CD4-positive, alpha-beta T cell (primary cell): ENCODE measurements at regions of chr13 and their contacts with region 1.

Region 1: GRCh38 chr13:30395192-30396084 is 26.9 kb upstream of the UBE2L5 start:
- DNase-seq: peak; percentile 48 to 89 (median 73)
- ATAC-seq: peak; percentile 78
- H3K4me3 ChIP-seq: peak overlapping the region; percentile 62
- H3K4me3 Mint-ChIP-seq: peak overlapping the region; percentile 90
- H3K27ac ChIP-seq: peak overlapping the region; percentile 82 to 94
- H3K27ac Mint-ChIP-seq: peak overlapping the region; percentile 89
- H3K4me1 ChIP-seq: peaks cover 37% of the 10 kb centered on the region
- H3K4me1 Mint-ChIP-seq: peaks cover 58% of the 10 kb centered on the region
- H3K27me3 ChIP-seq: no peaks in the 10 kb centered on the region
- H3K27me3 Mint-ChIP-seq: no peaks in the 10 kb centered on the region
- CTCF ChIP-seq: no peak

Region 2: DNA sequence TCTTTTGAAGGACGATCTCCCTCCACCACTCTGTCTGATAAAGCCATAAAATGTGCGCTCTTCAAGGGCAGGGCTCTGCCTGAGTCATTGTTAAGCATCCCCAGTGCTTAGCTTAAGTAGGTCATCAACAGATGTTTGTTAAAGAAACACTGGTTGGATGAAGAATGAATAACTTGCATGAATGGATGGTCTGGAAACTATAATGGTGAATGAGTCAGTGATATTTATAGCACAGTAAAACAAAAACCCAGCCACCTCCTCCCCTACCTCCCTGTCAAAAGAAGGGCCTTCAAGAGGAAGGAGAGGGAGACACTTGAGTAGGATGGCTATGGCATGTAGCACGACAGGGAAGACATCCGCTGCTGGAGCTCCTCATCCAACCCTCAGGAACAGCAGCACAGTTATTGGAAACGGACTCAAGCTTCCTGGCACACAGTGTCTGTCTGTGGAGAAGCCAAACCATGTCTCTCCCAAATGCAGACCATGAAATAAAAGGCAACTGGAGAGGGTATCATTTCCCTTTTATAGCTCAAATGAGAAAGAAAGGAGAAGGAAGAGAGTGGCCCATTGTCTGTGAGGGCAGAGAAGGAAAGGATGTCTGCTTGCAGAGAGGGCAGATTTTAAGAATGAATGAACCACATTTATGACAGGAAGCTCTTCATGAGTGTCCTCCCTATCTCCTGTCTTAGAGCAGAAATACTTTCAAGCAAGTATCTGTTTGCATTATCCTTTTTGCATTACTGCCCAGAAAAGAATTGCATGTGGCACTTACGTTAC is 361.6 kb before region 1 on chr13:
- CTCF ChIA-PET with region 1: no interaction called
- POLR2A ChIA-PET with region 1: no interaction called
- intact Hi-C with region 1: no loop called
- DNase-seq: no peak
- ATAC-seq: no peak
- H3K4me3 ChIP-seq: no peak overlapping the region
- H3K4me3 Mint-ChIP-seq: no peak overlapping the region
- H3K27ac ChIP-seq: no peak overlapping the region
- H3K27ac Mint-ChIP-seq: no peak overlapping the region
- H3K4me1 ChIP-seq: no peaks in the 10 kb centered on the region
- H3K4me1 Mint-ChIP-seq: no peaks in the 10 kb centered on the region
- H3K27me3 ChIP-seq: no peaks in the 10 kb centered on the region
- H3K27me3 Mint-ChIP-seq: no peaks in the 10 kb centered on the region
- CTCF ChIP-seq: no peak

Region 3: DNA sequence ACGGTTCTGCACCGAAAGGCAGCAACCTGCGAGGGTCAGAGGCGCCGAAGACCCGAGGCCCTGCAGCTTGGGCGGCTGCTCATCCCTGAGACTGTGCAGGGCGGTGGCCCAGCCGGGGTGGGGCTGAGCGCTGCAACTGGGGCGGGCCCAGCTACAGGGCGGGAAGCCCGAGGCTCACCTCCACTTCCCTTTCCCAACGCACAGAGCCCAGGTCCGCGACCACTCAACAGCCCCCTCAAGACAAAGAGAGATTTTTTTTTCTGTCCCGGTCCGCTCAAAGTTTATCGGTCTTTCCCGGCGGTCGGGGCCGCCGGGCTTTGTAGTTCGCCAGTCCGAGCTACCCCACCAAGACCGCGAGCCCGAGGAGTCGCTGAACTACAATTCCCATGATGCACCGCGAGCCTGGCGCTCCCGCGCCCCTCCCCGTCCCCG is 88.7 kb before region 1 on chr13:
- CTCF ChIA-PET with region 1: no interaction called
- POLR2A ChIA-PET with region 1: interaction called, 15 read pairs
- intact Hi-C with region 1: loop called in 1 of 2 experiments (anchors 5 kb)
- DNase-seq: peak; percentile 81 to 94 (median 88)
- ATAC-seq: peak; percentile 85
- H3K4me3 ChIP-seq: peak overlapping the region; percentile 86
- H3K4me3 Mint-ChIP-seq: peak overlapping the region; percentile 92
- H3K27ac ChIP-seq: peak overlapping the region; percentile 41 to 47
- H3K27ac Mint-ChIP-seq: peak overlapping the region; percentile 68
- H3K4me1 ChIP-seq: peaks cover 12% of the 10 kb centered on the region
- H3K4me1 Mint-ChIP-seq: peaks cover 12% of the 10 kb centered on the region
- H3K27me3 ChIP-seq: no peaks in the 10 kb centered on the region
- H3K27me3 Mint-ChIP-seq: no peaks in the 10 kb centered on the region
- CTCF ChIP-seq: no peak

Region 4: DNA sequence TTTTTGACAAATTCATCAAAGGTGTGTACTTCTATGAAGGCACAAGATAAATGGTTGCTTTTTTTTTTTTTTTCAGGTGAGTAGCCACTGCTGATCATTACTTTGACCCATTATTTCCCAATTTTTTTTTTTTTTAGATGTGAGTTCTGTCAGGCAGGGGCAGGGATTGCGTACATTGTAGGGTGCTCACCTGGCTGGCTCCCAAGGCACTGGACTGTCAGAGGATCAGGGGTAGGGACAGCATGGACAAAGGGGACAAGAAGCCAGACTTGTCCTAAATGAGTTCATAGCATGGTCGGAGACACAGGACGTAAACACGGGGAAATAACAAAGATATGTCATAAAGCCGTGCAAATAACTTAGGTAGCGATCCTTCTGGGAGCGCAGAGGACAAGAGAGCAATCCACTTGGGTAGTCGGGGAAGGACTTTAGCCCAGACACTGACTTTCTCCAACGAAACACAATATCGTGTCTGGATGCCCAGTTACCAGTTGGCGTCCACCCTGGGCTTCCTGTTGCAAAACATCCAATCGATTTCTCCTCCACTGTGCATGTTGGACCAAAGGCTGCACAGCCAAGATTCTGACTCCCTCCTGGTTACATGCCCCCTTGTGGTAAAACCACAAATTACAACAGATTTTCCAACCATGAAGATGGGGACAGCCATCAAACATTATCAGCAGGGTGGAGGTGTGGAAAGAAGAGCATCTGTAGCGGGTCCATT is 60.6 kb before region 1 on chr13:
- CTCF ChIA-PET with region 1: no interaction called
- POLR2A ChIA-PET with region 1: no interaction called
- intact Hi-C with region 1: no loop called
- DNase-seq: peak in 4 of 14 experiments; percentile 27 to 62 (median 58)
- ATAC-seq: no peak
- H3K4me3 ChIP-seq: no peak overlapping the region
- H3K4me3 Mint-ChIP-seq: no peak overlapping the region
- H3K27ac ChIP-seq: no peak overlapping the region
- H3K27ac Mint-ChIP-seq: no peak overlapping the region
- H3K4me1 ChIP-seq: peaks cover 10% of the 10 kb centered on the region
- H3K4me1 Mint-ChIP-seq: peaks cover 31% of the 10 kb centered on the region
- H3K27me3 ChIP-seq: no peaks in the 10 kb centered on the region
- H3K27me3 Mint-ChIP-seq: no peaks in the 10 kb centered on the region
- CTCF ChIP-seq: peak; percentile 43

Region 5: GRCh38 chr13:30346153-30346788 is 49.2 kb before region 1 on chr13:
- CTCF ChIA-PET with region 1: no interaction called
- POLR2A ChIA-PET with region 1: interaction called, 10 read pairs
- intact Hi-C with region 1: no loop called
- DNase-seq: peak; percentile 30 to 89 (median 56)
- ATAC-seq: peak; percentile 93
- H3K4me3 ChIP-seq: peak overlapping the region; percentile 18
- H3K4me3 Mint-ChIP-seq: peak overlapping the region; percentile 61
- H3K27ac ChIP-seq: no peak overlapping the region
- H3K27ac Mint-ChIP-seq: peak overlapping the region; percentile 62
- H3K4me1 ChIP-seq: peaks cover 38% of the 10 kb centered on the region
- H3K4me1 Mint-ChIP-seq: peaks cover 55% of the 10 kb centered on the region
- H3K27me3 ChIP-seq: no peaks in the 10 kb centered on the region
- H3K27me3 Mint-ChIP-seq: no peaks in the 10 kb centered on the region
- CTCF ChIP-seq: no peak

Region 6: DNA sequence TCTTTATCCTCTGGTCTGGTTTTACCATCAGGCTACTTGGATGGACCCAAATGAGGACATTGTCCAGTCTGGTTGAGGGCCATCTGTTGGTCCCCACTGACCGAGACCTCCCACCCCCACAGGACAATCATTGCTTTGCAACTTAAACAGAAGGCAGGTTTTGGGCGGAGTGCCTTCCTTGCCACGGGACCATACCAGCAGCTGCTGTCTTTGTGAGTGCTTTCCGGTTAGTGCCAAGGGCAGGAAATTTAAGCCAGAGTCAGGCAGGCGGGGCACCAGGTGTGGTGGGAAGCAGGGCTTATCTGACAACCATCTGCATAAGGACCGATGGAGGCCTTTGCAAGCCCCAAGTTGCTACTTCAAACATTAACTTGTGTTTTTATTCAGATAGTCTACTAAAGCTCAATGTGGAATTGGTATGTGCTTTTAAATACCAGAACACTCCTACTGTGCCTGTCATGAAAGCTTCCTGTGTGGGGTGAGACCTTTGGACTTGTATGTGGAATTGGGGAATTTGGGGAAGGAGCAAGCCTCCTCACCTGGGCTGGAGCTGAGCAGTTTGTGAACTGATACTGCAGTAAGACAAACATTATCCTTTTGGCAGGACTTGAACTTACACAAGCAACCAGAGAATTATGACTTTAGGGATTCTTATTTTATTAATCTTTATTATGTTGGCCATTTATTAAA is 12.5 kb before region 1 on chr13:
- CTCF ChIA-PET with region 1: interaction called, 3 read pairs
- POLR2A ChIA-PET with region 1: interaction called, 21 read pairs
- intact Hi-C with region 1: no loop called
- DNase-seq: peak in 3 of 14 experiments; percentile 25 to 48 (median 34)
- ATAC-seq: peak; percentile 54
- H3K4me3 ChIP-seq: no peak overlapping the region
- H3K4me3 Mint-ChIP-seq: peak overlapping the region; percentile 9
- H3K27ac ChIP-seq: no peak overlapping the region
- H3K27ac Mint-ChIP-seq: peak overlapping the region; percentile 6
- H3K4me1 ChIP-seq: peaks cover 22% of the 10 kb centered on the region
- H3K4me1 Mint-ChIP-seq: peaks cover 56% of the 10 kb centered on the region
- H3K27me3 ChIP-seq: no peaks in the 10 kb centered on the region
- H3K27me3 Mint-ChIP-seq: no peaks in the 10 kb centered on the region
- CTCF ChIP-seq: no peak

Region 7: GRCh38 chr13:30408319-30409101 is 13.1 kb after region 1 on chr13:
- CTCF ChIA-PET with region 1: interaction called, 10 read pairs
- POLR2A ChIA-PET with region 1: interaction called, 44 read pairs
- intact Hi-C with region 1: loop called (anchors 1 to 2 kb)
- DNase-seq: peak; percentile 83 to 96 (median 88)
- ATAC-seq: peak; percentile 91
- H3K4me3 ChIP-seq: peak overlapping the region; percentile 37
- H3K4me3 Mint-ChIP-seq: peak overlapping the region; percentile 76
- H3K27ac ChIP-seq: peak overlapping the region in 1 of 2 donors; percentile 76
- H3K27ac Mint-ChIP-seq: peak overlapping the region; percentile 78
- H3K4me1 ChIP-seq: peaks cover 20% of the 10 kb centered on the region
- H3K4me1 Mint-ChIP-seq: peaks cover 40% of the 10 kb centered on the region
- H3K27me3 ChIP-seq: no peaks in the 10 kb centered on the region
- H3K27me3 Mint-ChIP-seq: no peaks in the 10 kb centered on the region
- CTCF ChIP-seq: peak; percentile 63

Region 8: GRCh38 chr13:30422054-30422839 is 26.8 kb after region 1 on chr13 and contains the start of gene UBE2L5:
- CTCF ChIA-PET with region 1: interaction called, 3 read pairs
- POLR2A ChIA-PET with region 1: interaction called, 12 read pairs
- intact Hi-C with region 1: no loop called
- DNase-seq: peak in 13 of 14 experiments; percentile 40 to 88 (median 60)
- ATAC-seq: peak; percentile 93
- H3K4me3 ChIP-seq: peak within 1 kb of the TSS; percentile 60
- H3K4me3 Mint-ChIP-seq: peak within 1 kb of the TSS; percentile 91
- H3K27ac ChIP-seq: peak within 1 kb of the TSS in 1 of 2 donors; percentile 46
- H3K27ac Mint-ChIP-seq: peak within 1 kb of the TSS; percentile 83
- H3K4me1 ChIP-seq: peaks cover 12% of the 10 kb centered on the region
- H3K4me1 Mint-ChIP-seq: peaks cover 26% of the 10 kb centered on the region
- H3K27me3 ChIP-seq: no peaks in the 10 kb centered on the region
- H3K27me3 Mint-ChIP-seq: no peaks in the 10 kb centered on the region
- CTCF ChIP-seq: no peak
- total RNA-seq, gene UBE2L5: 0.11 TPM in 1 of 2 experiments, not detected in the other

Region 9: DNA sequence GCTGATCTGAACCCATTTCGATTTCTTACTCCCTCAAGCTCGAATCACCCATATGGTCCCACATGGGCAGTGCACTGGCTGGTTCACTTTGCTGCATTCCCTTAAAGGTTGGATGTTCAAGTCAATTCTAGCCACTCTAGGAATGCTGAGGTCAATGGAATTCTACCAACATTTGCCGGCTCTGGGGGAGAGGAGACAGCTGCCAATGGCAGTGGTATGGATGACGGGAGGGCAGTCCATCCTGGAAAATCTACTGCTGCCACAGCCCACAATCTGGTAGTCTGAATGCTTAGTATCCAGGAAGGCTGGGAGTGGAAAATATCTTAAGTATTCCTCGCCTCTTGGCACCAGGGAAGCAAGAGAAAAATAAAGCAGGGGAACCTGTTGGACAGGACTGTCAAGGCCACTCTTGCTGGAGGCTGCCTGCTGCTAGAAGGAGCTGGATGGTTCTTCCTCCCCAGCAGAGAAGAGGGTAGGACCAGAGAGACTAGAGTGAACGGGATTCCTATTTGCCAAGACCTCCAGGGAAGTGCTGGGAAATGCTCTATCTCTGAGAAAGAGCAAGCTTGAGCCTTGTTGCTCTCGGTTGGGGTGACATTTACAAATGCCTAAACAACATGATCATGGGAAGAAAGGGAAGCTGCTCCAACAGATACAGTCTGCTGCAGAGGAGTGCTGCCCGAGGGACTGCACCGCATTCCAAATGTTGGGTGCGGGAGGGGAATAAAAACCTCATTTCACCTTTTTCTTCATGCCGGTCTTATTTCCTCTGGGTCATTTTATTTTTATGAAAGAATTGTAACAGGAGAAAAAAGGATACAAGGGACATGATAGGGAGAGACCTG is 91.0 kb after region 1 on chr13:
- CTCF ChIA-PET with region 1: no interaction called
- POLR2A ChIA-PET with region 1: no interaction called
- intact Hi-C with region 1: no loop called
- DNase-seq: no peak
- ATAC-seq: no peak
- H3K4me3 ChIP-seq: no peak overlapping the region
- H3K4me3 Mint-ChIP-seq: no peak overlapping the region
- H3K27ac ChIP-seq: no peak overlapping the region
- H3K27ac Mint-ChIP-seq: no peak overlapping the region
- H3K4me1 ChIP-seq: no peaks in the 10 kb centered on the region
- H3K4me1 Mint-ChIP-seq: no peaks in the 10 kb centered on the region
- H3K27me3 ChIP-seq: no peaks in the 10 kb centered on the region
- H3K27me3 Mint-ChIP-seq: no peaks in the 10 kb centered on the region
- CTCF ChIP-seq: no peak

Region 10: DNA sequence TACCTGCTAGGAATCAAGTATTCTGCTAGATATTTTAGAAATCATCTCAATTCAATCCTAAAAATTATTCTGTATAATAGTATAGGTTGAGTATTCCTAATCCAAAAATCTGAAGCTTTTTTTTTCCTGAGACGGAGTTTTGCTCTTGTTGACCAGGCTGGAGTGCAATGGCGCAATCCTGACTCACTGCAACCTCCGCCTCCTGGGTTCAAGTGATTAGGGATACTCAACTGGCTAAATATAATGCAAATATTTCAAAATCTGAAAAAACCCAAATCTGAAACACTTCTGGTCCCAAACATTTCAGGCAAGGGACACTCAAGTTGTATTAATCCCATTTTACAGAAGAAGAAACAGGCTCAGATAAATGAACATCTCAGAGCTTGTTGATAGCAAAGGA is 205.1 kb after region 1 on chr13:
- CTCF ChIA-PET with region 1: no interaction called
- POLR2A ChIA-PET with region 1: no interaction called
- intact Hi-C with region 1: no loop called
- DNase-seq: no peak
- ATAC-seq: no peak
- H3K4me3 ChIP-seq: no peak overlapping the region
- H3K4me3 Mint-ChIP-seq: no peak overlapping the region
- H3K27ac ChIP-seq: no peak overlapping the region
- H3K27ac Mint-ChIP-seq: no peak overlapping the region
- H3K4me1 ChIP-seq: no peaks in the 10 kb centered on the region
- H3K4me1 Mint-ChIP-seq: peaks cover 3% of the 10 kb centered on the region
- H3K27me3 ChIP-seq: no peaks in the 10 kb centered on the region
- H3K27me3 Mint-ChIP-seq: no peaks in the 10 kb centered on the region
- CTCF ChIP-seq: no peak